HCT116 (cell line): ENCODE measurements at regions of chr16 and their contacts with region 1.

Region 1: DNA sequence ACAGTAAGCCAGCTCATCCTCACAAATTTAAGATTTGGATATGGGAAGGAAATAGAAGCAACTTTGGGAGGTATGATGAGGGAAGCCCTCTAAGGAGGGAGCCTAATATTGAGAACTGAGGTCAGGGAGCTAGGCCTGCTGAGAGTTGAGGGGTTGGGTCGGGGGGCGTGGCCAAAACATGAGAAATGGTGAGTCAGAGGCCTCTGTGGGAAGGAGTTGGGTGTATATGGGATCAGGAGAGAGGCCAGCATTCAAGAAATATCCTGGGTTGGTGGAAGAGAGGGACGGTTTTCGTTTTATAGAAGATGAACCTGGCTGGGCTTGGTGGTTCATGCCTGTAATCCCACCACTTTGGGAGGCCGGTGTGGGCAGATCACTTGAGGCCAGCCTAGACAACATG is 48.4 kb downstream of the CLEC16A start:
- DNase-seq: peak; percentile 52
- ATAC-seq: peak; percentile 70
- H3K4me3 ChIP-seq: peak overlapping the region; percentile 29 to 51
- H3K27ac ChIP-seq: peak overlapping the region; percentile 94
- H3K4me1 ChIP-seq: peaks cover 50 to 58% of the 10 kb centered on the region in 2 experiments
- H3K27me3 ChIP-seq: no peaks in the 10 kb centered on the region
- CTCF ChIP-seq: no peak
- POLR2A ChIP-seq: no peak
- RAD21 ChIP-seq: no peak

Region 2: GRCh38 chr16:11056090-11056992 is 63.5 kb after region 1 on chr16:
- CTCF ChIA-PET with region 1: no interaction called
- POLR2A ChIA-PET with region 1: no interaction called
- RAD21 ChIA-PET with region 1: no interaction called
- intact Hi-C with region 1: no loop called
- DNase-seq: no peak
- ATAC-seq: no peak
- H3K4me3 ChIP-seq: no peak overlapping the region
- H3K27ac ChIP-seq: no peak overlapping the region
- H3K4me1 ChIP-seq: no peaks in the 10 kb centered on the region
- H3K27me3 ChIP-seq: no peaks in the 10 kb centered on the region
- CTCF ChIP-seq: no peak
- POLR2A ChIP-seq: no peak
- RAD21 ChIP-seq: no peak

Region 3: GRCh38 chr16:11094072-11094856 is 101.5 kb after region 1 on chr16:
- CTCF ChIA-PET with region 1: no interaction called
- POLR2A ChIA-PET with region 1: no interaction called
- RAD21 ChIA-PET with region 1: no interaction called
- intact Hi-C with region 1: loop called (anchors 5 kb)
- DNase-seq: peak; percentile 77
- ATAC-seq: peak; percentile 82
- H3K4me3 ChIP-seq: peak overlapping the region in 1 of 2 experiments; percentile 8; a peak in 1 of 4 replicates
- H3K27ac ChIP-seq: peak overlapping the region; percentile 86
- H3K4me1 ChIP-seq: peaks cover 59 to 63% of the 10 kb centered on the region in 2 experiments
- H3K27me3 ChIP-seq: no peaks in the 10 kb centered on the region
- CTCF ChIP-seq: no peak
- POLR2A ChIP-seq: no peak
- RAD21 ChIP-seq: peak; percentile 34; the same call in 1 of the 2 replicates